CD4-positive, alpha-beta T cell (primary cell): ENCODE measurements at regions of chr1 and their contacts with region 1.

Region 1: GRCh38 chr1:169928438-169929209 is 34.9 kb upstream of the SCYL3 start:
- DNase-seq: peak in 3 of 14 experiments; percentile 65 to 66 (median 66)
- ATAC-seq: peak; percentile 80
- H3K4me3 ChIP-seq: no peak overlapping the region
- H3K4me3 Mint-ChIP-seq: no peak overlapping the region
- H3K27ac ChIP-seq: no peak overlapping the region
- H3K27ac Mint-ChIP-seq: no peak overlapping the region
- H3K4me1 ChIP-seq: no peaks in the 10 kb centered on the region
- H3K4me1 Mint-ChIP-seq: peaks cover 10% of the 10 kb centered on the region
- H3K27me3 ChIP-seq: no peaks in the 10 kb centered on the region
- H3K27me3 Mint-ChIP-seq: no peaks in the 10 kb centered on the region
- CTCF ChIP-seq: peak; percentile 86

Region 2: DNA sequence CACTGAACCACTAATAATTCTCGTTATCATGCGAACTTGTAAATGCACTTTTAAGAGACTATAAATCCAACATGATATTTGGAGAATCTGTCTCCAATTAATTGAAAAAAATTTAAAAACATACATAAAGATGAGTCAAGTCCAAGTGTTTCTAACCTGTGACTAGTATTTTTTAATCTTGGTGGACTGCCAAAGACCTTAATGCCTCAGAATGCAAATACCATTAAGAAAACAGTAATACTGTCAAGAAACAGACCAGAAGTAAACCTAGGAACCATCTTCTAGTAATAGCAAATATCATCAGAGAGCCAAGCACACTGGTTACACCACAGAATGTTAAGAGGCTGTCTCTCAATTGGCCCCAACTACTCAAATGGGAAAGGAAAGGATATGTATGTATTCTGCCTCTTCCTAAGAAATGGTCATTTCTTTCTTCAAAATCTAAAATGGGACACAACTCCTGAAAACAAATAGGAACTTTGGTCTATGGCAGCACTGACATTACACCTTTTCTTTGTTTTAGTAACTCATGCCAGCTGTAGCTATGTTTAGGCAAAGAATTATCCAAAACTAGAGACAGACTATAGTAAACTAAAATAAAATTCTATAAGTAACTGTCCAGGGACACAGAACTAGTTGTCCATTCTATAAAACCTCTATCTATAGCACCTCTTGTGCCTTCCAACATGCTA is 50.7 kb before region 1 on chr1:
- CTCF ChIA-PET with region 1: no interaction called
- POLR2A ChIA-PET with region 1: no interaction called
- intact Hi-C with region 1: loop called in 1 of 2 experiments (anchors 5 kb)
- DNase-seq: no peak
- ATAC-seq: no peak
- H3K4me3 ChIP-seq: no peak overlapping the region
- H3K4me3 Mint-ChIP-seq: no peak overlapping the region
- H3K27ac ChIP-seq: no peak overlapping the region
- H3K27ac Mint-ChIP-seq: no peak overlapping the region
- H3K4me1 ChIP-seq: no peaks in the 10 kb centered on the region
- H3K4me1 Mint-ChIP-seq: peaks cover 44% of the 10 kb centered on the region
- H3K27me3 ChIP-seq: no peaks in the 10 kb centered on the region
- H3K27me3 Mint-ChIP-seq: no peaks in the 10 kb centered on the region
- CTCF ChIP-seq: no peak

Region 3: GRCh38 chr1:170521818-170522217 is 593.2 kb after region 1 on chr1:
- CTCF ChIA-PET with region 1: no interaction called
- POLR2A ChIA-PET with region 1: no interaction called
- intact Hi-C with region 1: no loop called
- DNase-seq: no peak
- ATAC-seq: no peak
- H3K4me3 ChIP-seq: no peak overlapping the region
- H3K4me3 Mint-ChIP-seq: no peak overlapping the region
- H3K27ac ChIP-seq: no peak overlapping the region
- H3K27ac Mint-ChIP-seq: no peak overlapping the region
- H3K4me1 ChIP-seq: no peaks in the 10 kb centered on the region
- H3K4me1 Mint-ChIP-seq: no peaks in the 10 kb centered on the region
- H3K27me3 ChIP-seq: peaks cover 17 to 34% of the 10 kb centered on the region in 2 experiments
- H3K27me3 Mint-ChIP-seq: peaks cover 51% of the 10 kb centered on the region
- CTCF ChIP-seq: no peak

Region 4: GRCh38 chr1:170531758-170532657 is 603.4 kb after region 1 on chr1 and contains the start of gene GORAB:
- CTCF ChIA-PET with region 1: no interaction called
- POLR2A ChIA-PET with region 1: no interaction called
- intact Hi-C with region 1: loop called in 1 of 2 experiments (anchors 10 kb)
- DNase-seq: peak; percentile 69 to 92 (median 78)
- ATAC-seq: peak; percentile 91
- H3K4me3 ChIP-seq: peak within 1 kb of the TSS; percentile 61
- H3K4me3 Mint-ChIP-seq: no peak within 1 kb of the TSS
- H3K27ac ChIP-seq: peak within 1 kb of the TSS; percentile 73 to 86
- H3K27ac Mint-ChIP-seq: no peak within 1 kb of the TSS
- H3K4me1 ChIP-seq: peaks cover 12% of the 10 kb centered on the region
- H3K4me1 Mint-ChIP-seq: peaks cover 20% of the 10 kb centered on the region
- H3K27me3 ChIP-seq: no peaks in the 10 kb centered on the region
- H3K27me3 Mint-ChIP-seq: no peaks in the 10 kb centered on the region
- CTCF ChIP-seq: no peak
- total RNA-seq, gene GORAB: 23.0 to 26.6 TPM

Region 5: DNA sequence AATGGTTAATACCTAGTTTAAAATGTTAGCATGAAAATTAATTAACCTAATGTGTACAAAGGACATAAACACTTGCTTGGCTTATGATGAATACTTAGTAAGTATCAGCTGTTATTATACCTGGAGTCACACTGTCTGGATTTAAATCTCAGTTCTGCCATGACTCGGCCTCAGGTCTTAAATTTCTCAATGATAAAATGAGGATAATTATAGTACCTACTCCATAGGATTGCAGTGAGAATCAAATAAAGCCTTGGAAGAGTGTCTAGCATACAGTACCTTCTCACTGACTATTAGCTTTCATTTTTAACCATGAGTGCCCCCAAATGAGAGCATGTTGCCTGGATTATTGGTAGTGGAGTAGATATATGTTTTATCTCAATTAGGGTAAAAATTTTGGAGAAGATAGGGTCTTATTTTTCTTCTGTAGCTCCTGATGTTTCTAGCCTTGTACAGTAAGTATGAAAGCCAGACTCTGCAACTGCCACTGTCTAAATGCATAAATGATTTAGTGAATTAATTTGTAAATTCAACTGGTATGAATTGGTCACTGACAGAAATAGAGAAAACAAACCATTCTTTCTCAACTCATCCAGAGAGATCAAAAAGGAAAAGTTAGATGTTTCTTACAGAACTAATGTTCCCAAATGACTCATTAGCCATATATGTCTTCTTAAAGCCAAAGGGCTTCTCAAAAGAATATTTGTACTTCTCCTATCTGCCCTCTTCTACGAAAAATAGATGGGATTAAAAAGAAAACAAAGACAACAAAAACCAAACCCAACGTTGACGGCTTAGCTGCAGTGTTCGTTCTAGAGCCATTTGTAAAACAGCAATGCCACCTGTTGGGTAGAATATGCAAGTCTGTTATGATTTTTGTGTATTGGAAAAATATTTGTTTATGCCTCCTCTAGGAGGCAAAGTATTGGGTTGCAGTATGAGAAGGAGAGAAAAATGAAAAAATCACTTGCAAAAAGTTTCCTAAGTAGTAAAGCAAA is 952.9 kb after region 1 on chr1:
- CTCF ChIA-PET with region 1: no interaction called
- POLR2A ChIA-PET with region 1: no interaction called
- intact Hi-C with region 1: loop called in 1 of 2 experiments (anchors 5 kb)
- DNase-seq: peak in 1 of 14 experiments; percentile 0
- ATAC-seq: no peak
- H3K4me3 ChIP-seq: no peak overlapping the region
- H3K4me3 Mint-ChIP-seq: no peak overlapping the region
- H3K27ac ChIP-seq: no peak overlapping the region
- H3K27ac Mint-ChIP-seq: no peak overlapping the region
- H3K4me1 ChIP-seq: no peaks in the 10 kb centered on the region
- H3K4me1 Mint-ChIP-seq: no peaks in the 10 kb centered on the region
- H3K27me3 ChIP-seq: no peaks in the 10 kb centered on the region
- H3K27me3 Mint-ChIP-seq: peaks cover 10% of the 10 kb centered on the region
- CTCF ChIP-seq: no peak

Region 6: DNA sequence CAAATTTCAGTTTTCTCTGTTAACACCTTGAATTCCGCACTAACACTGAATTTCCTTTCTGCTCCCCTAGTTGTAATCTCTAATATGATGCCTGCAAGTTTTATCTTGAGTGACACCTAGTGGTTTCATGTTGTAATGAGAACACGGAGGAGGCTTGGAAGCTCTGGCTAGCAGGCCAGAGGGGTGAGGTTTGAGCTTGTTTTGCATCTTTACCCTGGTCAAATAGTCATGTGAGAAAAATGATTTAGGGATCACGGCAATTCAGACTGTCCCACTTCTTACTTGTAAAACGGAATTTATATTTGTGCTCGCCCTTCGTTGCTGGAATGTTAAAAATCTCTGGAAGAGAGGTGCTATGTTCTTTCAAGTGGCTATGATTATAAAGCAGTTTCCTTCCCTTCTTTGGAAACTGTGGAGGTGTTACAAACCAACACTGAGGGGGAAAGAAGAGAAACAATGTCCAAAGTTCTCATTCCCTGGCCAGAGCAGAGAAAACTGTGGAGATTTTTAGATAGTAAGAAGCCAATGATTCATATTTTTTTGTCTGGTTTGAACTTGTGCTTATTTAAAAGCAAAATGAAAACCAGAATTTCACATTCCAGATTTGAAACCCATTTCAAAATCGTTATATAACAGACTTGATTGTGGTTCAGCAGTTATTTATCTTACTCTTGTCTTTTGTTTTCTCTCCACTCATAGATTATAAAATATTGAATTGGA is 1001.4 kb after region 1 on chr1:
- CTCF ChIA-PET with region 1: interaction called, 8 read pairs
- POLR2A ChIA-PET with region 1: no interaction called
- intact Hi-C with region 1: loop called (anchors 1 to 2 kb)
- DNase-seq: peak in 4 of 14 experiments; percentile 9 to 53 (median 46)
- ATAC-seq: peak; percentile 58
- H3K4me3 ChIP-seq: no peak overlapping the region
- H3K4me3 Mint-ChIP-seq: no peak overlapping the region
- H3K27ac ChIP-seq: no peak overlapping the region
- H3K27ac Mint-ChIP-seq: no peak overlapping the region
- H3K4me1 ChIP-seq: no peaks in the 10 kb centered on the region
- H3K4me1 Mint-ChIP-seq: no peaks in the 10 kb centered on the region
- H3K27me3 ChIP-seq: no peaks in the 10 kb centered on the region
- H3K27me3 Mint-ChIP-seq: peaks cover 9% of the 10 kb centered on the region
- CTCF ChIP-seq: peak; percentile 79